Posterior cingulate gyrus (tissue), 11 donors: ENCODE measurements at regions of chr17 and their contacts with region 1.

Region 1: GRCh38 chr17:7394452-7395191 is at the start of gene PLSCR3:
- DNase-seq: peak; percentile 73 to 98 (median 87)

Region 2: DNA sequence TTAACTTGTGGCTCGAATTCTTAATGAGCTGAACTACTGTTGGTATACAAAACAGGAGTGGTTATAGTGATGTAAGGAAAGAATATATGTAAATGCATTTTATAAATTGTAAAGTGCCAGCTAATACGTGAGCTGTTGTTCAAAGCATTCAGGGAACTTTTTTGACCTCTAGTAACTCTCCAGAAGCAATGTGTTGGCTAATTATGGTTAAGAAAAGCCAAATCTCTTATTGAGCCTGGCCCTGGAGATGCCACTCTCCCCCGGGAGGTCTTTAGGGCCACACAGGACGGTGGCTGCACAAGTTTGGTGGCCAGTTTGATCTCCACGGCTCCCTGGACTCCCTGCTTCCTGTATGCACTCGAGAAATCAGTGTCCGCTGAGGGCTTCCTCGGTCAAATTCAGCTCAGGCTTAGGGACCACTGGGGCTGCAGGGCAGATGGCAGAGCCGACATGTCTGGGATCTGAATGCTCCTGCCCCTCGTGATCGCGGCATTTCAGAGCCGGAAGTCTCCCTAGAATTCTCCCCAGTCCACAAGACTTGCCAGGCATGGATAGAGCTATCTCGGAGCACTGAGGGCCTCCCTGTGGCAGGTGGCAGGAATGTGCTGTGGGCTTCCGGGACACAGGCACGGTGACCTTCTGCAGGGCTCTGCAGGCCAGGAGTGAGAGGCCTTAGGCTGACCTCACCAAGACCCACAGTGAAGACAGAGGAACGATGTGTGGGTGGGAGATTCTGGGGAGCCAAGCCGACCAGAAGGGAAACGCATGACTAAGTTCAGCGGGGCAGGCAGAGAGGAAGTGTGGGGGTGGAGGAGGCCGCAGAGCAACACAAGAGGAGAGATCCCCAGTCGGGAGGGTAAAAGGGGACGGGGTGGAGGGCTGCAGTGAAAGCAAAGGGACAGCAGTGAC is 819.7 kb before region 1 on chr17:
- intact Hi-C with region 1: no loop called
- DNase-seq: peak in 3 of 10 donors; percentile 19 to 79 (median 71)

Region 3: GRCh38 chr17:7413346-7413985 is 18.8 kb after region 1 on chr17:
- intact Hi-C with region 1: no loop called
- DNase-seq: no peak

Region 4: GRCh38 chr17:7435221-7435675 is 40.6 kb after region 1 on chr17 and contains the start of gene TMEM102:
- intact Hi-C with region 1: loop called (anchors 5 kb)
- DNase-seq: peak; percentile 77 to 98 (median 84)

Region 5: GRCh38 chr17:7445619-7445968 is 51.0 kb after region 1 on chr17:
- intact Hi-C with region 1: no loop called
- DNase-seq: no peak

Region 6: DNA sequence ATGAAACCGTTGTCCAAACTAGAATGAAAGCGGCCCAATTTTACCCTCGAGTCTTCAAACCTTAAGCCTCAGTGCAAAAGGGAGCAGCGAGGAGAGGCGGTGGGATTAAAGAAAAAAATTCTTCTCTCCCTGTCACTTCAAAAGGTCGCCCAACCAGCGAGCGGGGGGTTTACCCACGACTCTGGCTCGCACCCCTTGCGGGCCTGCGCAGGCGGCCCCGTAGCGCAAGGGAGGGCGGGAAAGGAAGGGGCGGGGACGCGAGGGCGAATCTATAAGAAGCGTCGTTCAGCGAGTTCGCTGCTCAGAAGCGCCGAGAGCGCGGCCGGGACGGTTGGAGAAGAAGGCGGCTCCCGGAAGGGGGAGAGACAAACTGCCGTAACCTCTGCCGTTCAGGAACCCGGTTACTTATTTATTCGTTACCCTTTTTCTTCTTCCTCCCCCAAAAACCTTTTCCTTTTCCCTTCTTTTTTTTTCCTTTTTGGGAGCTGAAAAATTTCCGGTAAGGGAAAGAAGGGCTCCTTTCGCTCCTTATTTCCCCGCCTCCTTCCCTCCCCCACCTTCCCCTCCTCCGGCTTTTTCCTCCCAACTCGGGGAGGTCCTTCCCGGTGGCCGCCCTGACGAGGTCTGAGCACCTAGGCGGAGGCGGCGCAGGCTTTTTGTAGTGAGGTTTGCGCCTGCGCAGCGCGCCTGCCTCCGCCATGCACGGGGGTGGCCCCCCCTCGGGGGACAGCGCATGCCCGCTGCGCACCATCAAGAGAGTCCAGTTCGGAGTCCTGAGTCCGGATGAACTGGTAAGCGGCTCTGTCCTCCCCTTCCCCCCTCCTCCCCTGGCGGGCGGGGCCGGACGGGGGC is 89.7 kb after region 1 on chr17 and contains the start of gene POLR2A:
- intact Hi-C with region 1: no loop called
- DNase-seq: peak; percentile 96 to 99 (median 98)